Activated CD4-positive, alpha-beta T cell treated with anti-CD3 and anti-CD28 coated beads for 36 hours (primary cell): ENCODE measurements at regions of chr18 and their contacts with region 1.

Region 1: GRCh38 chr18:42114310-42114943 is 159.4 kb downstream of the PIK3C3 start:
- DNase-seq: peak; percentile 71
- ATAC-seq: peak; percentile 81
- H3K4me3 Mint-ChIP-seq: no peak overlapping the region
- H3K27ac Mint-ChIP-seq: peak overlapping the region; percentile 29
- H3K4me1 Mint-ChIP-seq: peaks cover 10% of the 10 kb centered on the region
- H3K27me3 Mint-ChIP-seq: peaks cover 3% of the 10 kb centered on the region

Region 2: DNA sequence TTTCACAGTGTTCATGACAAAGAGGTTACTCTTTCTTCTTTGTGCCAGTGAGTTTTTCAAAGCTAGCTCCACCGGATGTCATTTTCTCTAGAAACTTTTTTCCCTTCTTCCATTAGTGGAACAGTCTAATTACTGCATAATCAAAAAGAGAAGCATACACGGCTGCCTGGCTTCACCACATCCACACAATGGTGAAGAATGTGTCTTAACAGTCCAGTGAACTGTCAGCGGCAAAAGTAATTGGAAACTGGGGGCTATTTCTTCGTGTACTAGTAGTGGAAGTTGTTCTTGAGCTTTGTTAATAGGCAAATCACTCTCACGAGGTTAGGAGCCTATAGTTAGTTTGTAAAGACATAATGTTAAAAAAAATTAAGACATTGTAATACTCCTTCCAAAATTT is 192.3 kb before region 1 on chr18:
- CTCF ChIA-PET with region 1: no interaction called
- POLR2A ChIA-PET with region 1: no interaction called
- intact Hi-C with region 1: no loop called
- DNase-seq: no peak
- ATAC-seq: no peak
- H3K4me3 Mint-ChIP-seq: no peak overlapping the region
- H3K27ac Mint-ChIP-seq: no peak overlapping the region
- H3K4me1 Mint-ChIP-seq: no peaks in the 10 kb centered on the region
- H3K27me3 Mint-ChIP-seq: peaks cover 8% of the 10 kb centered on the region

Region 3: GRCh38 chr18:42011053-42011452 is 103.4 kb before region 1 on chr18:
- CTCF ChIA-PET with region 1: no interaction called
- POLR2A ChIA-PET with region 1: no interaction called
- intact Hi-C with region 1: no loop called
- DNase-seq: no peak
- ATAC-seq: peak; percentile 96
- H3K4me3 Mint-ChIP-seq: no peak overlapping the region
- H3K27ac Mint-ChIP-seq: no peak overlapping the region
- H3K4me1 Mint-ChIP-seq: peaks cover 13% of the 10 kb centered on the region
- H3K27me3 Mint-ChIP-seq: no peaks in the 10 kb centered on the region

Region 4: DNA sequence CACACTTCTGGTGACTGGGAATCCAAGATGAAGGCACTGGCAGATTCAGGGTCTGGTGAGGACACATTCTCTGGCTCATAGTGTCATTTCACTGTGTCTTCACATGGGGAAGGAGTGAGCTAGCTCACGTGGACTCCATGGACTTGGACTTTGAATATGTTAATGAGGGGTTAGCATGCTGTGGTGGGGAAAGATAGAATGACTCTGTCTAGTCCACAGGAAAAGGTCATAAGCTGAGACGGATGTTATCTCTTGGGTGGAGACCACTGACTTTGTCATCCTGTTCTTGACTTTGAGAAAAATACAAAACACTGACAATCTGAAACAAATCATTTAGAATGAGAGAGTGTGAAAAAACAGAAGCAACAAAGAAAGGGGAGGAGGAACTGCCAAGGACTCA is 13.5 kb before region 1 on chr18:
- CTCF ChIA-PET with region 1: interaction called, 11 read pairs
- POLR2A ChIA-PET with region 1: no interaction called
- intact Hi-C with region 1: no loop called
- DNase-seq: no peak
- ATAC-seq: peak; percentile 39
- H3K4me3 Mint-ChIP-seq: no peak overlapping the region
- H3K27ac Mint-ChIP-seq: no peak overlapping the region
- H3K4me1 Mint-ChIP-seq: no peaks in the 10 kb centered on the region
- H3K27me3 Mint-ChIP-seq: peaks cover 2% of the 10 kb centered on the region

Region 5: GRCh38 chr18:42274488-42275137 is 160.2 kb after region 1 on chr18:
- CTCF ChIA-PET with region 1: interaction called, 11 read pairs
- POLR2A ChIA-PET with region 1: no interaction called
- intact Hi-C with region 1: loop called in 1 of 2 experiments (anchors 1 kb)
- DNase-seq: no peak
- ATAC-seq: no peak
- H3K4me3 Mint-ChIP-seq: no peak overlapping the region
- H3K27ac Mint-ChIP-seq: no peak overlapping the region
- H3K4me1 Mint-ChIP-seq: no peaks in the 10 kb centered on the region
- H3K27me3 Mint-ChIP-seq: no peaks in the 10 kb centered on the region

Region 6: GRCh38 chr18:43271593-43272432 is 1157.4 kb after region 1 on chr18:
- CTCF ChIA-PET with region 1: interaction called, 19 read pairs
- POLR2A ChIA-PET with region 1: no interaction called
- intact Hi-C with region 1: loop called (anchors 1 kb)
- DNase-seq: peak; percentile 26
- ATAC-seq: no peak
- H3K4me3 Mint-ChIP-seq: no peak overlapping the region
- H3K27ac Mint-ChIP-seq: no peak overlapping the region
- H3K4me1 Mint-ChIP-seq: no peaks in the 10 kb centered on the region
- H3K27me3 Mint-ChIP-seq: peaks cover 2% of the 10 kb centered on the region

Region 7: GRCh38 chr18:43563780-43564179 is 1449.4 kb after region 1 on chr18:
- CTCF ChIA-PET with region 1: interaction called, 3 read pairs
- POLR2A ChIA-PET with region 1: no interaction called
- intact Hi-C with region 1: loop called in 1 of 2 experiments (anchors 1 kb)
- DNase-seq: no peak
- ATAC-seq: no peak
- H3K4me3 Mint-ChIP-seq: no peak overlapping the region
- H3K27ac Mint-ChIP-seq: no peak overlapping the region
- H3K4me1 Mint-ChIP-seq: no peaks in the 10 kb centered on the region
- H3K27me3 Mint-ChIP-seq: no peaks in the 10 kb centered on the region